Activated T-helper 2 cell treated with anti-CD3 and anti-CD28 coated beads, Interferon-gamma antibody, Interleukin-2, Interleukin-4, amounts not matched to agents 10 μg/mL and 5 μg/mL and 100 μg/mL, durations not matched to agents 14 hours and 24 hours and 36 hours (primary cell): ENCODE measurements at regions of chr11 and their contacts with region 1.

Region 1: DNA sequence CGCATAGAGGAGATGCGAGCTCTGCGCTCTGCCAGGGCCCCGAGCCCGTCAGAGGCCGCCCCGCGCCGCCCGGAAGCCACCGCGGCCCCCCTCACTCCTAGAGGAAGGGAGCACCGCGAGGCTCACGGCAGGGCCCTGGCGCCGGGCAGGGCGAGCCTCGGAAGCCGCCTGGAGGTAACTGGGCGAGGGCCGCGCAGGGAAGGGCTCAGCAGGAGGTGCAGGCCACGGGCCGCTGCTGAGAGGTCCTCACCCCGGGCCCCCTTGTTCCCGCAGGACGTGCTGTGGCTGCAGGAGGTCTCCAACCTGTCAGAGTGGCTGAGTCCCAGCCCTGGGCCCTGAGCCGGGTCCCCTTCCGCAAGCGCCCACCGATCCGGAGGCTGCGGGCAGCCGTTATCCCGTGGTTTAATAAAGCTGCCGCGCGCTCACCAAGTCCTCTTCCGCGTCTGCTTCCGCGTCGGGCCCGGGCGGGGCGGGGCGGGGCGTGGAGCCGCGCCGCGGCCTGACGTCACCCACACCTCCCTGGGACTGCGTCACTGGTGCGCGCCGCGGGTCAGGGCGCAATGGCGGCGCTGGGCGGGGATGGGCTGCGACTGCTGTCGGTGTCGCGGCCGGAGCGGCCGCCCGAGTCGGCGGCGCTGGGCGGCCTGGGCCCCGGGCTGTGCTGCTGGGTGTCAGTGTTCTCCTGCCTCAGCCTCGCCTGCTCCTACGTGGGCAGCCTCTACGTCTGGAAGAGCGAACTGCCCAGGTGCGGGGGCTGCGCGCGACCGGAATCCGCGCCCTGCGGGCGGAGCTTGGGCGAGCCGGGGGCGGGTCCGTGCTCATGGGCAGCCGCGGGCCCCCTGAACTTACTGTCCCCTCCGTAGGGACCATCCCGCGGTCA is at the start of gene RCE1:
- DNase-seq: peak; percentile 90
- H3K4me3 Mint-ChIP-seq: peak within 1 kb of the TSS; percentile 96
- H3K27ac Mint-ChIP-seq: peak within 1 kb of the TSS; percentile 94
- H3K4me1 Mint-ChIP-seq: peaks cover 39% of the 10 kb centered on the region
- H3K27me3 Mint-ChIP-seq: no peaks in the 10 kb centered on the region
- total RNA-seq, gene RCE1: 27.5 and 27.8 TPM in 2 replicates

Region 2: DNA sequence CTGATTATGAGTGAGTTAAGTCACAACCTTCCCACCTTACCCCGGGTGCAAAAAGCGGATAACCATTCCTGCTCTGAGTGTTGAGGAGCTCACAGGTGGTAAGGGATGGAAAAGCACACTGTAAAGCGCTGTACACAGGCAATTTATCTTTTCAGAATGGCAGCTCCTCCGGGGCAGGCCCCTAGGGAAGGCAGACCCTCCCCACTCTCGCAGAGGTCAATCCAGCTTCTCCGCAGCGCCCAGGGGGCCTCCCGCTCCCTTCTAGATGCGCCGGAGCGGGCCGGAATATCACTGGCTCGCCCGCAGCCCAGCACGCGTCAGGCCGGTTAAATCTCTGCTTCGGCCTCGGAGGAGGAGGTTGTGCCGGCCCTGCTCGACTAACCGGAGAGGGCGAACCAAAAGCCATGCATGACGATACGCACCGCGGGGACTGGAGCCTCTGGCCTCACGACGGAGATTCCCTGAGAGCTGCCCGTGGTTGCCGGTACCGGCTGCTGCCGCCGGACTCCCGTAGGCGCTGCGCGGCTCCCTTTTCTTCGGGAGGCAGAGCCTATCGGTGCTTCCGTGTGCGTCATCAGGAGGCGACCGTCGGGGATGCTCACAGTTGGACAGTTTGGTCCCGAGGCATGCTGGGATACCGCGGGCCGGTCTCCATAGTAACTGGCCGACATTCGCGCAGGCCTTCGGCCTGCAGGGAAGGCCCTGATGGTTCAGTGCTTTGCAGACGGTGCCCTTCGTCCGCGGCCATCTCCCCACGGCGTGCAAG is 498.4 kb before region 1 on chr11 and contains the start of gene BRMS1:
- intact Hi-C with region 1: loop called (anchors 5 kb)
- DNase-seq: peak; percentile 93
- H3K4me3 Mint-ChIP-seq: peak within 1 kb of the TSS; percentile 93
- H3K27ac Mint-ChIP-seq: peak within 1 kb of the TSS; percentile 91
- H3K4me1 Mint-ChIP-seq: peaks cover 32% of the 10 kb centered on the region
- H3K27me3 Mint-ChIP-seq: no peaks in the 10 kb centered on the region
- total RNA-seq, gene BRMS1: 45.1 and 46.0 TPM in 2 replicates

Region 3: GRCh38 chr11:66677599-66678375 is 165.3 kb before region 1 on chr11 and contains the start of gene RBM4B:
- intact Hi-C with region 1: loop called (anchors 5 kb)
- DNase-seq: peak; percentile 92
- H3K4me3 Mint-ChIP-seq: peak within 1 kb of the TSS; percentile 92
- H3K27ac Mint-ChIP-seq: peak within 1 kb of the TSS; percentile 97
- H3K4me1 Mint-ChIP-seq: peaks cover 30% of the 10 kb centered on the region
- H3K27me3 Mint-ChIP-seq: no peaks in the 10 kb centered on the region
- total RNA-seq, gene RBM4B: 16.5 and 18.4 TPM in 2 replicates

Region 4: GRCh38 chr11:66855574-66856495 is 12.7 kb after region 1 on chr11:
- intact Hi-C with region 1: loop called (anchors 2 kb)
- DNase-seq: peak; percentile 88
- H3K4me3 Mint-ChIP-seq: peak overlapping the region; percentile 92
- H3K27ac Mint-ChIP-seq: peak overlapping the region; percentile 82
- H3K4me1 Mint-ChIP-seq: peaks cover 11% of the 10 kb centered on the region
- H3K27me3 Mint-ChIP-seq: no peaks in the 10 kb centered on the region

Region 5: DNA sequence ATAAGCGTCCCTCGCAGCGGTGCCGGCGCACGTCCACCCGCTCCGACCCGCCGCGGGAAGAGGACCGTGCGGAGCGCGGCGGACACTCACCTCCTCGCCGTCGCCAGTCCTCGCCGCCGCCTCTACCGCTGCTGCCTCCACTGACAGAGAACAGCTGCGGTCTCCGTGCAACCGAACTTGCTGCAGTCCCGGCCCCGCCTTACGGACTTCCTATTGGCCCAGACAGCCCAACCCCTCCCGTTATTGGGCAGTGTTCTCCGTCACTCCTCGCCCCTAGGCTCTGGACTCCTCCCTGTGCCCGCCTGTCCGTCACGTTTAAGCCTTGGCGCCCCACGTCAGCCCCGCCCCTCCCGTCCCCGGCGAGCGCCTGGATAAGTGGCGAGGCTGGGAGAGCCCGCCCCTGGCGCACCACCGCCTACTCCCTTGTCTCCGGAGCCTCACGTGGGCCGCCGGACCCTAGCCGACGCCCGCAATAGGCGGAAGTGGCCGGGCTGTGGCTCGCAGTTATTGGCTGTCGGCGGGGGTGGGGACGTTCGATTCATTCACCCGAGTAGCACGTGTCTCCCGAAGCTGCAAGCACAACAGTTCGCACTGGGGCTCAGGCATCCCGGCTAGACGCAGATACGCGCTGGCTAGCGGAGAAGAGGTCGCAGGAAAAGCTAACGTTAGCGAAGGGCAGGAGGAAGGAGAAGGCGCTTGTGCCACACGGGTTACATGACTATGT is 115.3 kb after region 1 on chr11 and contains the start of gene PC:
- intact Hi-C with region 1: loop called (anchors 5 kb)
- DNase-seq: peak; percentile 98
- H3K4me3 Mint-ChIP-seq: peak within 1 kb of the TSS; percentile 78
- H3K27ac Mint-ChIP-seq: peak within 1 kb of the TSS; percentile 93
- H3K4me1 Mint-ChIP-seq: peaks cover 15% of the 10 kb centered on the region
- H3K27me3 Mint-ChIP-seq: peaks cover 3% of the 10 kb centered on the region
- total RNA-seq, gene PC: 15.4 and 18.0 TPM in 2 replicates